ENCODE measurements at regions of chr7 and their contacts with region 1.

Region 1: GRCh38 chr7:23273141-23273599 is 26.0 kb upstream of the MALSU1 start:
- DNase-seq: peak; percentile 66 to 79
- ATAC-seq: peak; percentile 63 to 92 (median 86)
- H3K4me3 ChIP-seq: no peak overlapping the region
- H3K27ac ChIP-seq: no peak overlapping the region
- H3K4me1 ChIP-seq: peaks cover 0 to 14% (median 0%) of the 10 kb centered on the region in 9 donors
- H3K27me3 ChIP-seq: no peaks in the 10 kb centered on the region
- CTCF ChIP-seq: peak; percentile 30 to 85 (median 70)

Region 2: GRCh38 chr7:23454881-23455506 is 181.8 kb after region 1 on chr7:
- intact Hi-C with region 1: loop called in 5 of 10 experiments (anchors 5 kb)
- DNase-seq: no peak
- ATAC-seq: no peak
- H3K4me3 ChIP-seq: no peak overlapping the region
- H3K27ac ChIP-seq: no peak overlapping the region
- H3K4me1 ChIP-seq: no peaks in the 10 kb centered on the region
- H3K27me3 ChIP-seq: peaks cover 0 to 91% (median 77%) of the 10 kb centered on the region in 7 donors
- CTCF ChIP-seq: no peak

Region 3: DNA sequence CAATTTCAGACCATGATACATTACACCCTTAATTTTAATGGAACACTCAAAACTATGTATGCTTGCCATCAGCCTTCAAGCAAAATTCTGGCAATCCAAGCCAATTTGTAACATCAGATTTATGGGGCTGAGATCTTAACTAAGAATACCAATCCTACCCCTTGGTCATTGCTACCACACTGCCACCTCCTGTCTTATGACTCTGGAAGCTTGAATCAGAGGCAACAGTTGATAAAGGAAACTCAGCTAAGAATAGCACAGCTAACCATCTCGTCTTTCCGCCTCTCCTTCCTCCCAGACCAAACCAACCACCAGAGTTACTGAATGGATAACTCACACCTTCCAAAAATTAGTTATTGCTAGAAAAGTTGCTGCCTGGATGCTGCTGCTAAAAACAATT is 189.7 kb after region 1 on chr7:
- intact Hi-C with region 1: loop called in 7 of 10 experiments (anchors 1 to 5 kb)
- DNase-seq: no peak
- ATAC-seq: peak in 7 of 8 donors; percentile 62 to 93 (median 72)
- H3K4me3 ChIP-seq: no peak overlapping the region
- H3K27ac ChIP-seq: no peak overlapping the region
- H3K4me1 ChIP-seq: peaks cover 0 to 6% (median 4%) of the 10 kb centered on the region in 9 donors
- H3K27me3 ChIP-seq: peaks cover 3 to 98% (median 97%) of the 10 kb centered on the region in 7 donors
- CTCF ChIP-seq: peak in 7 of 9 donors; percentile 31 to 56 (median 46)

Region 4: GRCh38 chr7:23546897-23547572 is 273.9 kb after region 1 on chr7:
- intact Hi-C with region 1: loop called in 1 of 10 experiments (anchors 10 kb)
- DNase-seq: peak; percentile 37 to 76
- ATAC-seq: peak in 7 of 8 donors; percentile 58 to 91 (median 83)
- H3K4me3 ChIP-seq: no peak overlapping the region
- H3K27ac ChIP-seq: no peak overlapping the region
- H3K4me1 ChIP-seq: peaks cover 0 to 3% (median 0%) of the 10 kb centered on the region in 9 donors
- H3K27me3 ChIP-seq: no peaks in the 10 kb centered on the region
- CTCF ChIP-seq: peak in 8 of 9 donors; percentile 85 to 97 (median 94)

Region 5: GRCh38 chr7:23712368-23713284 is 439.5 kb after region 1 on chr7:
- intact Hi-C with region 1: loop called in 2 of 10 experiments (anchors 10 kb)
- DNase-seq: no peak
- ATAC-seq: peak in 2 of 8 donors; percentile 42 to 71
- H3K4me3 ChIP-seq: no peak overlapping the region
- H3K27ac ChIP-seq: no peak overlapping the region
- H3K4me1 ChIP-seq: no peaks in the 10 kb centered on the region
- H3K27me3 ChIP-seq: no peaks in the 10 kb centered on the region
- CTCF ChIP-seq: peak; percentile 47 to 81 (median 64)

Measured in heart right ventricle (tissue), 16 donors.